A549 (cell line): ENCODE measurements at regions of chr15 and their contacts with region 1.

Region 1: GRCh38 chr15:100349696-100350433 is 8.1 kb upstream of the ADAMTS17 start:
- DNase-seq: peak; percentile 95 to 96
- ATAC-seq: peak; percentile 89 to 97
- H3K4me3 ChIP-seq: peak overlapping the region; percentile 60
- H3K27ac ChIP-seq: peak overlapping the region; percentile 90 to 97
- H3K4me1 ChIP-seq: peaks cover 9% of the 10 kb centered on the region
- CTCF ChIP-seq: peak; percentile 75
- EP300 ChIP-seq: no peak
- POLR2A ChIP-seq: no peak
- RAD21 ChIP-seq: peak; percentile 46 to 71

Region 2: GRCh38 chr15:100308213-100308600 is 41.7 kb before region 1 on chr15:
- CTCF ChIA-PET with region 1: interaction called, 13 read pairs
- POLR2A ChIA-PET with region 1: no interaction called
- DNase-seq: no peak
- ATAC-seq: no peak
- H3K4me3 ChIP-seq: no peak overlapping the region
- H3K27ac ChIP-seq: no peak overlapping the region
- H3K4me1 ChIP-seq: no peaks in the 10 kb centered on the region
- CTCF ChIP-seq: no peak
- EP300 ChIP-seq: no peak
- POLR2A ChIP-seq: no peak
- RAD21 ChIP-seq: no peak

Region 3: GRCh38 chr15:100383302-100384107 is 33.6 kb after region 1 on chr15:
- CTCF ChIA-PET with region 1: interaction called, 291 read pairs
- POLR2A ChIA-PET with region 1: interaction called, 15 read pairs
- DNase-seq: peak; percentile 39 to 64
- ATAC-seq: peak; percentile 86 to 93
- H3K4me3 ChIP-seq: no peak overlapping the region
- H3K27ac ChIP-seq: no peak overlapping the region
- H3K4me1 ChIP-seq: no peaks in the 10 kb centered on the region
- CTCF ChIP-seq: peak; percentile 74
- EP300 ChIP-seq: no peak
- POLR2A ChIP-seq: no peak
- RAD21 ChIP-seq: peak; percentile 80 to 87

Region 4: DNA sequence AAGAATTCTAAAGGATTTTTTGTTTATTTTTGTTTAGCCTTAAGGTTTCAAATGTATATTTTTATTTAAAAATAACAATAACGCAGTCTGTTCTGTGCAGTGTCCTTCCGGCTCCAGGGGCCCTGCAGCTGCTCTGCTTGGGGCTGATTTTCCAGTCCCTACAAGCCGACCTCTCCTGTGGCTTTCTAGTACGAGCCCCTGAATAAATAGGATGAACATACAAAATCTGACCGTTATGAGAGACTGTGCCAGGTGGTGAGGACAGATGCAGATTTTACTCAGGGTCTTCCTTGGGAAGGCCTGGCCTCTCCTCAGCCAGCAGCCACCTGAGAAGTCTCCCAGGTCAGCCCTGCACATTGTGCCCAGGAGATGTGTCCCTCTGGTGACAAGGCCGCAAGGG is 51.1 kb after region 1 on chr15:
- CTCF ChIA-PET with region 1: interaction called, 11 read pairs
- POLR2A ChIA-PET with region 1: no interaction called
- DNase-seq: no peak
- ATAC-seq: no peak
- H3K4me3 ChIP-seq: no peak overlapping the region
- H3K27ac ChIP-seq: no peak overlapping the region
- H3K4me1 ChIP-seq: no peaks in the 10 kb centered on the region
- CTCF ChIP-seq: no peak
- EP300 ChIP-seq: no peak
- POLR2A ChIP-seq: no peak
- RAD21 ChIP-seq: no peak

Region 5: DNA sequence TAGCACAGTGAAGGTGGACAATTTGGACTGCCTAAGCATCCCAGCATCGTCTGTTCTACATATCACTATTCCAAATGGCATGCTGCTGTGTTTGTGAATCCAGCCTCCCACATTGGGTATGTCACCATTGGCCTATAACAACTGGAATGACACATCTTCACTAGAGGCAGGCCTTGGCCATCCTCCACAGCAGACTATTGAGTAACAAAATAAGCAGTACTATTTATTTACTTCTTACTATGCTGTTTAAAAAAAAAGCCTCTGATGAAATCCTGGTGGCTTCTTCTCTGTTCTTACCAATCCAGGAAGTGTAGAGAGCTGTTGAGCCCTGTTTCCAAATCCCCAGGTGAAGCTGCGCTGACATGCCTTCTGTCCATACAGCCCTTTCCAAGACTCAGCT is 209.5 kb after region 1 on chr15:
- CTCF ChIA-PET with region 1: interaction called, 13 read pairs
- POLR2A ChIA-PET with region 1: no interaction called
- DNase-seq: peak in 1 of 2 experiments; percentile 36
- ATAC-seq: peak in 1 of 2 experiments; percentile 59; a peak in 4 of 6 replicates
- H3K4me3 ChIP-seq: no peak overlapping the region
- H3K27ac ChIP-seq: no peak overlapping the region
- H3K4me1 ChIP-seq: no peaks in the 10 kb centered on the region; the same call in 2 of the 3 replicates
- CTCF ChIP-seq: no peak
- EP300 ChIP-seq: no peak
- POLR2A ChIP-seq: no peak
- RAD21 ChIP-seq: no peak